ENCODE measurements at regions of chr7 and their contacts with region 1.

Region 1: DNA sequence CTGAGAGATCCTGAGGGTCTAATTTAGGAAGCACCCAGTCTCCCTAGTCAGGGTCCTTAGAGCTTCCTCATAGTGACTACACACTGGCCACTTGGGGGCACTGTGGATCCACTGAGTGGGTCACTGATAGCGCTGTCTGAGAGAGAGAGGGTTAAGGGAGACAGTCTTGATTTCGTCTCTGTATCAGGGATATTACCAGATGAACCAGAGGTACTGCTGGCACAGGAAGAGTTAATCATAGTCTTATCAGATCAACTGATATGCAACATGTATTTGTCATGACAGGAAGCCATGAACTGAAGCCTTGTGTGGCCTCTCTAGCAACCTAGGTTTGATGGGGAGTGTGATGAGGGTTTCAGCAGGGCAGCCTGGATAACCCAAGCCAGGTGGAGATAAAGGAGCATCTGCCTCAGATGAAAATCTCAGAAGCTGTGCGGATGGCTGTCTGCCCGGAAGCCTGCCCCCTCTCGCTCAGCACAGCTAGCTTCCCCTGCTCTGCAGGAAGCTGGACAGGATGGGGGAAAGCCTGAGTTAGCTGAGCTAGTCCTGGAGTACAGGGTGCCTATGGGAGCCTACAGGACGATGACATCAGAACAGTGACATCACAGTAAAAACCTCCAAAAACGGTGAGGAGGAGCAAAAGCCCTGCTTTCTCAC is 214.0 kb upstream of the PRSS1 start:
- DNase-seq: peak; percentile 42
- H3K4me3 ChIP-seq: no peak overlapping the region
- H3K27me3 ChIP-seq: no peaks in the 10 kb centered on the region
- CTCF ChIP-seq: peak; percentile 87

Region 2: DNA sequence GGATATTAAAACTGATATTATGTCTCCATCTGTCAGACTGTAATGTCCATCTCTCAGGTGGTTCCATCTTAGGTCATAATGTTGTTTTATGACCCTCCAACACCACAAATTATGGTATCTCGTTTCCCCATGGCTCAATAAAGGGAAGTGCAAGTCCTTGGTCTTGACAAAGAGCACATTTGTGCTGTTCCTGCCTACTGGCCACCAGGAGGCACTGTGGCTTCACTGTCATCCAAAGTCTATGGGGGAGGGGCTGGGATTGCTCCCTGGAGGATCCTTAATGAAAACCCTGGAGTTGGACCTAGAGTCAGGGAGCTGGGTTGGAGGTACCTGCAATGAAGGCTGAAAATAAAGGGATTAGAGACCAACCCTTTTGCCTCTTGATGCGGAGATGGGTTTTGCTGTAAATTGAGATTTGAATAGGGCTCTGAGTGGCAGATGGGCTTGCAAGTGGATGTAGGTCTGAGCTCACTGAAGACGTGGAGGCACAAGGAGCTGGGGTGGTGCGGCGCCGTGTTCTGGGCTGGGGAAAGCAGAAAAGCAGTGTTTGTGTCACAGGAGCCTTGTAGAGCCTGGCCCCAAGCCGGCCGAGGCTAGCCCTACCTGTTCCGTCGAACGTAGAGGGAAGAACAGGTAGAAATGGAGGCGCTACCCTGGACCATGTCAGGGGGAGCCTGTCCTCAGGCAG is 96.9 kb before region 1 on chr7:
- CTCF ChIA-PET with region 1: interaction called, 10 read pairs
- POLR2A ChIA-PET with region 1: no interaction called
- DNase-seq: no peak
- H3K4me3 ChIP-seq: no peak overlapping the region
- H3K27me3 ChIP-seq: no peaks in the 10 kb centered on the region
- CTCF ChIP-seq: peak; percentile 68

Region 3: DNA sequence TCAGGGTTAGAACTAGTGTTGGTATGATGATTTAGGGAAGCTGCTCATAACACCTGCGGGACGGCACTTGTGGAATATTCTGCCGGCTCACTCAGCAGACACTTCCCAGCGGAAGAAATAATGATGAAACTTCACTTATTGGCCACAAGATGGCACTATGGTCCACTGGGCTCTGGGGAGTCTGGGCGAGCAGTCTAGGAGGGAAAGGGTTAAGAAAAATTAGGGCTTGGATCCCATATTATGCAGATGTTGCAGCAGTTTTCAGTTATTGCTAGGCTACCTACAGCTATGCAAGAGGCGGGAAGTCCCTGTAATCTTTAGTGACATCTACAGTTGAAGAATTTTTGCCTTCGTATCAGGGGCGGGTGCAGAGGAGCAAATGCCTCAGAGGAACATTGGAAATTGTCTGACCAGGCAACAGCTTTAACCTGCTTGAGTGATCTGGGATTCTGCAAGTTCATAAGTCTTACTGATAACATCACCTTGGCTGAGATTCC is 38.7 kb before region 1 on chr7:
- CTCF ChIA-PET with region 1: interaction called, 21 read pairs
- POLR2A ChIA-PET with region 1: no interaction called
- DNase-seq: no peak
- H3K4me3 ChIP-seq: no peak overlapping the region
- H3K27me3 ChIP-seq: peaks cover 16% of the 10 kb centered on the region
- CTCF ChIP-seq: peak; percentile 77

Region 4: GRCh38 chr7:142557971-142558582 is 22.8 kb after region 1 on chr7:
- CTCF ChIA-PET with region 1: interaction called, 65 read pairs
- POLR2A ChIA-PET with region 1: interaction called, 3 read pairs
- DNase-seq: no peak
- H3K4me3 ChIP-seq: no peak overlapping the region
- H3K27me3 ChIP-seq: no peaks in the 10 kb centered on the region
- CTCF ChIP-seq: peak; percentile 78

Region 5: GRCh38 chr7:142598297-142598696 is 63.0 kb after region 1 on chr7:
- CTCF ChIA-PET with region 1: interaction called, 38 read pairs
- POLR2A ChIA-PET with region 1: no interaction called
- DNase-seq: no peak
- H3K4me3 ChIP-seq: no peak overlapping the region
- H3K27me3 ChIP-seq: no peaks in the 10 kb centered on the region
- CTCF ChIP-seq: no peak

Region 6: GRCh38 chr7:142714375-142714774 is 179.1 kb after region 1 on chr7:
- CTCF ChIA-PET with region 1: interaction called, 10 read pairs
- POLR2A ChIA-PET with region 1: no interaction called
- DNase-seq: no peak
- H3K4me3 ChIP-seq: no peak overlapping the region
- H3K27me3 ChIP-seq: peaks cover 7% of the 10 kb centered on the region; the same call in 1 of the 2 replicates
- CTCF ChIP-seq: no peak

Region 7: GRCh38 chr7:142739923-142740492 is 204.8 kb after region 1 on chr7:
- CTCF ChIA-PET with region 1: no interaction called
- POLR2A ChIA-PET with region 1: no interaction called
- DNase-seq: no peak
- H3K4me3 ChIP-seq: no peak overlapping the region
- H3K27me3 ChIP-seq: no peaks in the 10 kb centered on the region; the same call in 1 of the 2 replicates
- CTCF ChIP-seq: no peak

Region 8: DNA sequence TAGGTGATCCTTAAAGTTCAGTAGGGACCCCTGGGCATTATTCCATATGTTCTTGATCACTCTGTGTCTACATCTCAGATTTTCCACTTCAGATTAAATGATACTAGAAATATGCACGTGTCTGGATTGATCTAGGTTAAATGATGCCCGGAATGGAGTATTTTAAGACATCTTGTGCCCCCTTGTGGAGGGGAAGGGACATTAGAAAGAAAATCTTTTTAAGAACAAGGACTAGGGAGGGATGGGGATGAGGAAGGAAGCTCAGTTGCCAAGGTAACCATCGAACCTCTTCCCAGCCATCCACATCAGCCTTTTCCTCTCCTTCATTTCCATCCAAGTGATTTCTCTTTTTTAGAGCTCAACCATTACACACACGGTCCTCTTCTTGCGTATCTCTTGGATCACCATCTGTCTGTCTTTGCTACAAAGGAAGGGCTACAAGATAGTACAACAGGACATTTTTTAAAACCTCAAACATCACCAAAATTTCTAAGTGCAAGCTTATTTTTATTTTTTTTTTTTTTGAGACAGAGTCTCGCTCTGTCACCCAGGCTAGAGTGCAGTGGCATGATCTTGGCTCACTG is 276.0 kb after region 1 on chr7:
- CTCF ChIA-PET with region 1: interaction called, 22 read pairs
- POLR2A ChIA-PET with region 1: no interaction called
- DNase-seq: no peak
- H3K4me3 ChIP-seq: no peak overlapping the region
- H3K27me3 ChIP-seq: peaks cover 6% of the 10 kb centered on the region; the same call in 1 of the 2 replicates
- CTCF ChIP-seq: peak; percentile 71

Measured in BJ (cell line).